A673 (cell line): ENCODE measurements at regions of chr9 and their contacts with region 1.

Region 1: GRCh38 chr9:78035383-78035993 is 3.9 kb upstream of the GNAQ start:
- DNase-seq: peak; percentile 89
- H3K4me3 ChIP-seq: no peak overlapping the region
- H3K27ac ChIP-seq: no peak overlapping the region
- H3K4me1 ChIP-seq: peaks cover 38% of the 10 kb centered on the region
- H3K27me3 ChIP-seq: no peaks in the 10 kb centered on the region
- CTCF ChIP-seq: peak; percentile 92

Region 2: DNA sequence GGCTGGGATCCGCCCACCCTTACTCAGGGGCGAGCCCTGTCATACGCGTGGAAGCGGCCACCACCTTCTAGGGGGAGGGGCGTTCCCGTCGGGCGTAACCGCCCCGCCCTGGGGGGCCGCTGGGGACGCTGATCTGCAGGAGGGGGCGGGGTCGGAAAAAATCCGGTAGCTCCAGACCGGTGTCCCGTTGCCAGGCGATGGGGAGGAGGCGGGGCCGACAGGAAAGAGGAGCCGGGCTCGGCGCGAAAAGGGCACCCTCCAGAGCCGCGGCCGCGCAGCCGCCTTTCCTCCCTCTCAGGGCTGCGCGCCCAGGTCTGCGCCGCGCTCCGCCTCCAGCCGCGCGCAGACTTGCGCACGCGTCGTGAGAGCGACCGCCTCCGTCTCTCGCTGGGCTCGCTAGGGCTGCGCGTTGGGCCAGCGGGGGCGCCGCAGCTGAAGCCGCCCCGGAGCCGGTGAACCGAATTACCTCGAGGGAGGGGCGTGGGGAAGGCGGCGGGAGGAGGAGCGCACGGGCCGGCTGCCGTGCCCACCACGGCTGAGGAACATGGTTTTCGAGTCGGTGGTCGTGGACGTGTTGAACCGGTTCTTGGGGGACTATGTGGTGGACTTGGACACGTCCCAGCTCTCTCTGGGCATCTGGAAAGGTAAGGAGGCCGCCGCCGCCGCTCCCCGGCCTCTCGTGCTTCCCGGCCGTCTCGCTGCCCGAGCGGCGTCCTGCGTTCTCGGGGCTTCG is 858.2 kb before region 1 on chr9 and contains the start of gene VPS13A:
- CTCF ChIA-PET with region 1: no interaction called
- POLR2A ChIA-PET with region 1: no interaction called
- intact Hi-C with region 1: loop called (anchors 5 kb)
- DNase-seq: peak; percentile 98
- H3K4me3 ChIP-seq: peak within 1 kb of the TSS; percentile 89
- H3K27ac ChIP-seq: peak within 1 kb of the TSS; percentile 70
- H3K4me1 ChIP-seq: peaks cover 12% of the 10 kb centered on the region
- H3K27me3 ChIP-seq: peaks cover 4% of the 10 kb centered on the region
- CTCF ChIP-seq: peak; percentile 41; the same call in 1 of the 2 replicates
- total RNA-seq, gene VPS13A: 32.2 and 39.5 TPM in 2 replicates

Region 3: DNA sequence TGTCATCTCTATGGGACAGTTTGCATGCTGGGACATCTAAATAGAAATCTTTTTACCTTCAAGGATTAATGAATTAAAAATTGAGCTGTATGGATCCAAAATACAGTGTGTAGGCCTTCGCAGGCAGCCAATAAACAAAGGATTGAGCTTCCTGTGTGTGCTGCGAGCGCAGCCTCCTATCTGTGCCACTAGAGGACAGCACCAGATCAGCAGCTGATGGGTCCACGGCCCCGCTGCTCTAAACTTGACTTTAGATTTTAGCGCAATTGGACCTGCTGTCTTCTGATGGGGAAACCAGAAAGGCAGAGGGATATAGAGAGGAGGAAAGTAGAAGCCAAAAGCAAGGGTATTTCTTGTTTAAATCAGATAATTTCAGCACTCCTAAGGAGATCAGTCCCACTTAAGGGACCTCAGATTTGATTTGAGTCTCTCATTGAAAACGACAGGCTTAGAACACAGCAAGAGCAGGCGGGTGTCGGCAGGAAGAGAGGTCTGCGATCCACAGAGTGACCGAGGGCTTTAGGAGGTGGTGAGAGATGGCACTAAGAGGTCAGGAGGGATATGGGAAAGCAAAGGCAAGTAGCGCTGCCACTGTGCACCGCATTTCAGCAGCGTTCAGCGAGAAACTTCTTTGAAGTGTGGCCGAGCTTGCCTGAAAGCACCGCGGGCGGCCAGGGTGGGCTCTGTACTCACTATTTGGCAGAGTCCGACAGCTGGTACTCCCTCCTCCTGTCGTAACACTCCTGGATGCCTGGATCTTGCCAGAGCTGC is 601.6 kb before region 1 on chr9:
- CTCF ChIA-PET with region 1: no interaction called
- POLR2A ChIA-PET with region 1: no interaction called
- intact Hi-C with region 1: loop called (anchors 5 kb)
- DNase-seq: peak; percentile 90
- H3K4me3 ChIP-seq: no peak overlapping the region
- H3K27ac ChIP-seq: no peak overlapping the region
- H3K4me1 ChIP-seq: peaks cover 33% of the 10 kb centered on the region
- H3K27me3 ChIP-seq: peaks cover 3% of the 10 kb centered on the region
- CTCF ChIP-seq: peak; percentile 99

Region 4: DNA sequence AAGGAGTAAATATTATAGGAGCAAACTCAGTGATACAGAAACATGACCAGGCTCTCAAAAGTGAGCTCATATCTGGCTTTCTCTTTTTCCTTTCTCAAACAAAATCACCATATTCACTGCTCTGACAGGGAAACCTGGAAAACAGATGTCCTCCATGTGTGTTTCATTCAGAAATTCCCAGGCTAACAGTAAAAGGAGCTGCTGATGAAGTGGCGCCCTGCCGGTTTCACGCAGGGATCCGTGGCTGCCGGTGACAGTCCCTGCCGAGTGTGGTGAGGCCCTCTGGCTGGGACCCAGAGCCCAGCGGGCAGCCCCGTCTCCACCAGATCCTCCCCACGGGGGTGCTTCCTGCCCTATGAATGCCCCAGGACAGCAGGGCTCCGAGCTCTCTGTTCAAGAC is 595.4 kb before region 1 on chr9:
- CTCF ChIA-PET with region 1: no interaction called
- POLR2A ChIA-PET with region 1: no interaction called
- intact Hi-C with region 1: loop called (anchors 5 kb)
- DNase-seq: peak; percentile 99
- H3K4me3 ChIP-seq: peak overlapping the region; percentile 10
- H3K27ac ChIP-seq: peak overlapping the region; percentile 95
- H3K4me1 ChIP-seq: peaks cover 55% of the 10 kb centered on the region
- H3K27me3 ChIP-seq: no peaks in the 10 kb centered on the region
- CTCF ChIP-seq: no peak

Region 5: GRCh38 chr9:77640741-77641580 is 394.5 kb before region 1 on chr9:
- CTCF ChIA-PET with region 1: no interaction called
- POLR2A ChIA-PET with region 1: no interaction called
- intact Hi-C with region 1: loop called (anchors 1 kb)
- DNase-seq: peak; percentile 96
- H3K4me3 ChIP-seq: no peak overlapping the region
- H3K27ac ChIP-seq: peak overlapping the region; percentile 99
- H3K4me1 ChIP-seq: peaks cover 63% of the 10 kb centered on the region
- H3K27me3 ChIP-seq: no peaks in the 10 kb centered on the region
- CTCF ChIP-seq: no peak

Region 6: GRCh38 chr9:77977210-77977611 is 58.3 kb before region 1 on chr9:
- CTCF ChIA-PET with region 1: interaction called, 13 read pairs
- POLR2A ChIA-PET with region 1: no interaction called
- intact Hi-C with region 1: loop called (anchors 2 kb)
- DNase-seq: peak; percentile 76
- H3K4me3 ChIP-seq: no peak overlapping the region
- H3K27ac ChIP-seq: peak overlapping the region; percentile 5
- H3K4me1 ChIP-seq: peaks cover 71% of the 10 kb centered on the region
- H3K27me3 ChIP-seq: no peaks in the 10 kb centered on the region
- CTCF ChIP-seq: peak; percentile 71